ENCODE measurements at regions of chr6 and their contacts with region 1.

Region 1: DNA sequence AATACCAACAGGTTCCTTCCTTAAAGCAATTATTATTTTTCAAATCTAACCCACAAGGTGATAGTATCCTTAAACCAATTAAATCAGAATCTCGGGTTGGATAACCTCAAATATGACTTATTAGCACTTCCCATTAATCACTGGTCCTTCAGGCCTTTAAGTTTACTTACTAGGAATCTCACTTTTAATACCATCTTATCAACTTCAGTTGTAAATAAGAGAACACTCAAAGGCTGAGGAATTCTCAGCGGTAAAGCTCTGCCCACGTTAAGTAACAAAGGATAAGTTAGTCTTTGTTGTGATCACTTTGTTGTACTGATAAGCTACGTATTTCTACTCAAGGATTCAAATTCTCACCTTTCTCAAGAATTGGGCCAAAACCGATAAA is 82.0 kb downstream of the OR2B2 start:
- DNase-seq: no peak
- ATAC-seq: peak; percentile 3; the same call in 1 of the 2 replicates
- H3K4me3 ChIP-seq: peak overlapping the region; percentile 62
- H3K27ac ChIP-seq: peak overlapping the region; percentile 79; the same call in 1 of the 2 replicates
- H3K4me1 ChIP-seq: peaks cover 4% of the 10 kb centered on the region; the same call in 1 of the 2 replicates
- H3K27me3 ChIP-seq: no peaks in the 10 kb centered on the region
- CTCF ChIP-seq: no peak
- POLR2A ChIP-seq: no peak
- RAD21 ChIP-seq: no peak

Region 2: GRCh38 chr6:27809939-27810767 is 20.1 kb before region 1 on chr6:
- CTCF ChIA-PET with region 1: no interaction called
- POLR2A ChIA-PET with region 1: no interaction called
- dilution Hi-C with region 1: no loop called
- in situ Hi-C with region 1: no loop called
- intact Hi-C with region 1: no loop called
- DNase-seq: peak; percentile 98
- ATAC-seq: peak; percentile 52
- H3K4me3 ChIP-seq: peak overlapping the region; percentile 58
- H3K27ac ChIP-seq: peak overlapping the region; percentile 87
- H3K4me1 ChIP-seq: peaks cover 3% of the 10 kb centered on the region
- H3K27me3 ChIP-seq: no peaks in the 10 kb centered on the region
- CTCF ChIP-seq: 0 out of 2 replicates have a peak, but pooled peaks have one; percentile 16
- POLR2A ChIP-seq: peak; percentile 99
- RAD21 ChIP-seq: no peak

Region 3: DNA sequence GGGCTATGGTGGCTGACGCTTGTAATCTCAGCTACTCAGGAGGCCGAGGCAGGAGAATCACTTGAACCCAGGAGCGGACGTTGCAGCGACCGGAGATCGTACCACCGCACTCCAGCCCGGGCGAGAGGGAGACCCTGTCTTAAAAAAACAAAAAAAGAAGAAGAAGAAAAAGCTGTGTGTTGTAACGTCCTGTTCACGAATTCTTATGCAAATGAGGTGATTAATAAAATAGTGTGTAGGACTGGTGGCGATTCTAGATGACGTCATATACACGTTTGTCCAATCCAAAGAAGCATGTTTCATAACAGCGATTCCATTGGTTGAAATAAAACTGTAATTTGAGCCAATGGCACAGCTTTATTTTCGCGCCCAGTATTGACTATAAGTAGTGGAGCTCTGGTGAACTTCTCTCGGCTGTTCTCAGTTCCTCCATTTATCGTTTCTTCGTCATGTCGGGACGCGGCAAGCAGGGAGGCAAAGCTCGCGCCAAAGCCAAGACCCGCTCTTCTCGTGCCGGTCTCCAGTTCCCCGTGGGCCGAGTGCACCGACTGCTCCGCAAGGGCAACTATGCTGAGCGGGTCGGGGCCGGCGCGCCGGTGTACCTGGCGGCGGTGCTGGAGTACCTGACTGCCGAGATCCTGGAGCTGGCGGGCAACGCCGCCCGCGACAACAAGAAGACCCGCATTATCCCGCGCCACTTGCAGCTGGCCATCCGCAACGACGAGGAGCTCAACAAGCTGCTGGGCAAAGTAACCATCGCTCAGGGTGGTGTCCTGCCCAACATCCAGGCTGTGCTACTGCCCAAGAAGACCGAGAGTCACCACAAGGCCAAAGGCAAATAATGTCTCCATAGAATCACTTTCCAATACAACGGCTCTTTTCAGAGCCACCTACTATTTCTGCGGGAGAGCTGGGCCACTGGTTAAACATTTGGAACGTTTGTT is 35.0 kb after region 1 on chr6:
- CTCF ChIA-PET with region 1: interaction called, 3 read pairs
- POLR2A ChIA-PET with region 1: interaction called, 61 read pairs
- dilution Hi-C with region 1: no loop called
- in situ Hi-C with region 1: loop called (anchors 5 kb)
- intact Hi-C with region 1: no loop called
- DNase-seq: peak; percentile 99
- ATAC-seq: peak; percentile 75
- H3K4me3 ChIP-seq: peak overlapping the region; percentile 76
- H3K27ac ChIP-seq: peak overlapping the region; percentile 77
- H3K4me1 ChIP-seq: peaks cover 9% of the 10 kb centered on the region
- H3K27me3 ChIP-seq: no peaks in the 10 kb centered on the region
- CTCF ChIP-seq: no peak
- POLR2A ChIP-seq: peak; percentile 94
- RAD21 ChIP-seq: no peak

Region 4: GRCh38 chr6:27871924-27872638 is 41.9 kb after region 1 on chr6:
- CTCF ChIA-PET with region 1: no interaction called
- POLR2A ChIA-PET with region 1: interaction called, 61 read pairs
- dilution Hi-C with region 1: no loop called
- in situ Hi-C with region 1: loop called (anchors 5 kb)
- intact Hi-C with region 1: loop called (anchors 2 kb)
- DNase-seq: peak; percentile 97
- ATAC-seq: peak; percentile 76
- H3K4me3 ChIP-seq: peak overlapping the region; percentile 79
- H3K27ac ChIP-seq: peak overlapping the region; percentile 95
- H3K4me1 ChIP-seq: no peaks in the 10 kb centered on the region
- H3K27me3 ChIP-seq: no peaks in the 10 kb centered on the region
- CTCF ChIP-seq: peak; percentile 24; the same call in 1 of the 2 replicates
- POLR2A ChIP-seq: peak; percentile 99
- RAD21 ChIP-seq: no peak

Region 5: DNA sequence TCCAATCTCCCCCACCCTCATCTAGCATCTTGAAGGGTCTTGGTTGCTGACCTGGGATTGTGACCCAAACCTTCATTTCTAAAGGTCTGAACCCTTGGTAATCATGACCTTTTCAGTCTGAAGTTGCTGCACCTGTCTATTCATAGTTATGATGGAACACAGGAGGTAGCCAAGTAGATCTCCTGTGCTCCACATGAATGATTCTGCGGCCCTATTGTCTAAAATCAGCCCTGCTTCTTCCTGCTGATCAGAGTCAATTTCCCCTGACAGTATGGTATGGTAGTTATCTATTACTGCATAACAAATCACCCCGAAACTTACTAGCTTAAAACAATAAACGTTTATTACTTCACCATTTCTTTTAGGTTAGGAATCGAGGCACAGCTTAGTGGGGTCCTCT is 135.8 kb after region 1 on chr6:
- CTCF ChIA-PET with region 1: no interaction called
- POLR2A ChIA-PET with region 1: no interaction called
- dilution Hi-C with region 1: no loop called
- in situ Hi-C with region 1: no loop called
- intact Hi-C with region 1: no loop called
- DNase-seq: no peak
- ATAC-seq: no peak
- H3K4me3 ChIP-seq: no peak overlapping the region
- H3K27ac ChIP-seq: no peak overlapping the region
- H3K4me1 ChIP-seq: no peaks in the 10 kb centered on the region
- H3K27me3 ChIP-seq: no peaks in the 10 kb centered on the region
- CTCF ChIP-seq: no peak
- POLR2A ChIP-seq: no peak
- RAD21 ChIP-seq: no peak

Measured in IMR-90 (cell line).